Psoas muscle (tissue), 8 donors: ENCODE measurements at regions of chr1 and their contacts with region 1.

Region 1: GRCh38 chr1:184892116-184892515 is 82.2 kb downstream of the NIBAN1 start:
- DNase-seq: no peak
- ATAC-seq: peak in 1 of 4 donors; percentile 19
- H3K4me3 ChIP-seq: no peak overlapping the region
- H3K27ac ChIP-seq: peak overlapping the region; percentile 72
- H3K4me1 ChIP-seq: peaks cover 50% of the 10 kb centered on the region
- H3K27me3 ChIP-seq: no peaks in the 10 kb centered on the region
- CTCF ChIP-seq: no peak

Region 2: GRCh38 chr1:184276416-184276815 is 615.7 kb before region 1 on chr1:
- intact Hi-C with region 1: no loop called
- DNase-seq: no peak
- ATAC-seq: no peak
- H3K4me3 ChIP-seq: no peak overlapping the region
- H3K27ac ChIP-seq: no peak overlapping the region
- H3K4me1 ChIP-seq: no peaks in the 10 kb centered on the region
- H3K27me3 ChIP-seq: no peaks in the 10 kb centered on the region
- CTCF ChIP-seq: no peak

Region 3: GRCh38 chr1:184805667-184806295 is 86.3 kb before region 1 on chr1:
- intact Hi-C with region 1: loop called in 1 of 2 experiments (anchors 5 kb)
- DNase-seq: peak; percentile 89 to 93
- ATAC-seq: peak; percentile 79 to 89 (median 80)
- H3K4me3 ChIP-seq: no peak overlapping the region
- H3K27ac ChIP-seq: peak overlapping the region; percentile 84
- H3K4me1 ChIP-seq: peaks cover 47% of the 10 kb centered on the region
- H3K27me3 ChIP-seq: no peaks in the 10 kb centered on the region
- CTCF ChIP-seq: peak; percentile 94

Region 4: GRCh38 chr1:184827600-184828368 is 64.3 kb before region 1 on chr1:
- intact Hi-C with region 1: loop called in 1 of 2 experiments (anchors 5 kb)
- DNase-seq: no peak
- ATAC-seq: peak; percentile 87 to 88 (median 88)
- H3K4me3 ChIP-seq: no peak overlapping the region
- H3K27ac ChIP-seq: peak overlapping the region; percentile 92
- H3K4me1 ChIP-seq: peaks cover 69% of the 10 kb centered on the region
- H3K27me3 ChIP-seq: no peaks in the 10 kb centered on the region
- CTCF ChIP-seq: no peak

Region 5: DNA sequence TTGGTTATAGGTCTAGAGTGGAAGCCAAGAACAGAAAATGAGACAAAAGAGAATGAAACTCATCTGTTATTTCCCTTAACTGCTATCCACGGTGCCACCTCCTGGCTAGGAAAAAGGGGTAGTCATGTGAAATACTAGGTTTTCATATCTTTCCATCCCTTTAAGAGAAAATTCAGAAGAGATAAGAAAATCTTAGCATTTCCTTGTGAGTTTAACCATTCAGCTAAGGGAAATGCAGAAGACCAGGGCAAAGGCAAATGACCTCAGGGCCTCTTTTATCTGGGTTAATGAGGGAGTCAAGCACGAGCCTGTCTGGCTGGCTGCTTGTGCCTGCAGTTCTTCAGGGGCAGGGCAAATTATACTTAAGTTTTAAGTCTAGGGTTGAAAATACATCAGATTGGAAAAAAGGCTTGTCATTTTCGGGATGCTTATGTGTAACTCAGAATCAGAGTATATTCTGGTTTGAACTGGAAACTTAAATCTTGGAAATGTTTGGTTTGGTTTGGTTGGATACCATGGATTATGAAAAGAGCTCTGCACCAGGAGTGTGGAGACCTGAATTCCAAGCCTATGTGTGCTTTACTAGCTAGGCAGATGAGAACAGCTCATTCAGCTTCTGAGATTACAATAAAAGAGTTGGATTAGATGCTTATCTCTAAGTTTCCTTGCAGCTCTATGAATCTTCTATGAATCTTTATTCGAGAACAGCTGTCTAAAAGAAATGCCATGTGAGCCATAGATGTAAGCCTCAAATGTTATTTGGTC is 62.3 kb after region 1 on chr1:
- intact Hi-C with region 1: loop called in 1 of 2 experiments (anchors 2 kb)
- DNase-seq: no peak
- ATAC-seq: no peak
- H3K4me3 ChIP-seq: no peak overlapping the region
- H3K27ac ChIP-seq: peak overlapping the region; percentile 6
- H3K4me1 ChIP-seq: peaks cover 15% of the 10 kb centered on the region
- H3K27me3 ChIP-seq: no peaks in the 10 kb centered on the region
- CTCF ChIP-seq: no peak

Region 6: GRCh38 chr1:184973272-184974055 is 81.3 kb after region 1 on chr1:
- intact Hi-C with region 1: loop called in 1 of 2 experiments (anchors 5 kb)
- DNase-seq: peak; percentile 41 to 70
- ATAC-seq: peak; percentile 61 to 85 (median 78)
- H3K4me3 ChIP-seq: peak overlapping the region; percentile 80
- H3K27ac ChIP-seq: peak overlapping the region; percentile 89
- H3K4me1 ChIP-seq: peaks cover 20% of the 10 kb centered on the region
- H3K27me3 ChIP-seq: no peaks in the 10 kb centered on the region
- CTCF ChIP-seq: no peak